ENCODE measurements at regions of chr2 and their contacts with region 1.

Region 1: DNA sequence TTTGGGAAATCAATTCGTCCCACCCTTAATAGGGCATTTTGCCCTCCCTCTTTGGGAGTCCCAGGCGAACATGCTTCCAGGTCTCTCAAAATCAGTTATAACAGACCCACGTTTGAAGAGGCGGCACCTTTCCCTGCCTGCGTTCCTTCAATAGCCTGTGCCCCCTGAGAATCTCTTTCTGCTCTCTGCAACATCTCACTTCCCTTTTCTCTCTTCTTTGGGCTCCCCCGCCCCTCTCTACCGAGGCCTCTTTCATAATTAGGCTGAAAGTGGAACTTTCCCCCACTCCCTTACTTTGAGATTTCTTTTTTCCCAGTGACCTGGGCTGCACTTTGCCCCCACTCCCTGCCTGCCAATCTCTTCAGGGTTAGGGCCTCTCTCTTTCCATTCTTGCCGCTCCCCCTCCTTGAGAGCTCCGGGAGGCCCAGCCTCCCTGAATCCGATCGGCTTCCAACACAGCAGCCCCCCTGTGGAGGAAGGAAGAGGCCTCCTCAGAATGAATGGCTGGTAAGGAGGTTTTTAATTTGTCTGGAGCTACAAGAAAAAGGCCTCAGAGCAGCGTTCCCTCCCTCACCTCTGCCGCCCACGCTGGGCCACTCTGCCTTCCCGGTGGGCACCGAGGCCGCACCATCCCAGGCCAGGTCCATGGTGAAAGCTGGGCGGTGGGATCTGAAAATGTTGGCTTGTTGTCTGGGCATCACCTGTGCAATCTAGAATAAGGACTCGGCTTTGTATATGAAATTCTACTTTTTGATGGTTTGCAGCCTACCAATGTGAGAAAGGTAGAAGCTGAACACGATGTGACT is 162.6 kb upstream of the SIX3 start:
- DNase-seq: peak in 1 of 2 experiments; percentile 73
- H3K4me3 ChIP-seq: peak overlapping the region; percentile 6 to 50 (median 29)
- H3K27ac ChIP-seq: no peak overlapping the region; the same call in 1 of the 2 replicates
- H3K4me1 ChIP-seq: peaks cover 16 to 38% (median 32%) of the 10 kb centered on the region in 4 experiments
- H3K27me3 ChIP-seq: peaks cover 0 to 2% (median 0%) of the 10 kb centered on the region in 4 experiments; a peak in 1 of 7 replicates
- CTCF ChIP-seq: no peak
- EP300 ChIP-seq: no peak
- POLR2A ChIP-seq: no peak
- RAD21 ChIP-seq: no peak; a peak in 3 of 4 replicates

Region 2: GRCh38 chr2:44793322-44793870 is 14.5 kb after region 1 on chr2:
- CTCF ChIA-PET with region 1: interaction called, 18 read pairs
- POLR2A ChIA-PET with region 1: interaction called, 27 read pairs
- DNase-seq: peak in 1 of 2 experiments; percentile 59
- H3K4me3 ChIP-seq: no peak overlapping the region
- H3K27ac ChIP-seq: no peak overlapping the region
- H3K4me1 ChIP-seq: peaks cover 9 to 23% (median 16%) of the 10 kb centered on the region in 4 experiments
- H3K27me3 ChIP-seq: no peaks in the 10 kb centered on the region; a peak in 3 of 7 replicates
- CTCF ChIP-seq: no peak
- EP300 ChIP-seq: no peak
- POLR2A ChIP-seq: no peak
- RAD21 ChIP-seq: no peak

Region 3: DNA sequence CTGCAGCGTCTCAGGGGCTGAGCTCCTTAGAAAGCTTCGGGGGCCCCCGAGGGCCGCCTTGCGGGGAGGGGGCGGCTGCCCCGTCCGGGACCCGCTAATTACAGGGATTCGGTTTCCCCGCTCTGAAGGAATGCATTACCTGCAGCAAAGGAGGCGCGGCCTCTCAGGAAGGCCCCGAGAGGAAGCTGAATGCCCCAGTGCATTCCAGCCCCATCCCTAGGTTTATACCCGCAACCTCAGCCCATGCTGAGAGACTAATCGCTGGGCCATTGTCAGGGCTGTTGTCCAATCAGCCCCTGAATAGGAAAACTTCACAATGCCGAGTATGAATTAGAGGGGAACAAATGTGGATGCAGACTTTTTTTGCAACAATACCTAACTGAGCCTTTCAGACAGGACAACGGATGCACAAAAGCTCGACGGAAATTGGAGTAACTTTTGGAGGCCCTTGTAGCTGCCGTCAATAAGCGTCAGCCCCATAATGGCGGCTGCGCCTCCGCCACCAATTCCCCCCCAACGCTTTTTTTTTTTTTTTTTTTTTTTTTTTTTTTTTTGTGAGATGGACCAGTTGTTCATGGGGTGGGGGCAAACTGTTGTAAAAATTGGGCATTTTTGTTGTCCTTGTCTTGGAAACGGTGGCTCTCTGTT is 24.0 kb after region 1 on chr2:
- CTCF ChIA-PET with region 1: interaction called, 4 read pairs
- POLR2A ChIA-PET with region 1: interaction called, 23 read pairs
- DNase-seq: peak; percentile 88 to 92
- H3K4me3 ChIP-seq: peak overlapping the region; percentile 33 to 65 (median 44)
- H3K27ac ChIP-seq: no peak overlapping the region
- H3K4me1 ChIP-seq: peaks cover 13 to 46% (median 37%) of the 10 kb centered on the region in 4 experiments
- H3K27me3 ChIP-seq: peaks cover 0 to 5% (median 2%) of the 10 kb centered on the region in 4 experiments; a peak in 3 of 7 replicates
- CTCF ChIP-seq: no peak
- EP300 ChIP-seq: peak in 1 of 2 experiments; percentile 92; a peak in 2 of 3 replicates
- POLR2A ChIP-seq: peak in 1 of 2 experiments; percentile 57; a peak in 1 of 3 replicates
- RAD21 ChIP-seq: no peak; a peak in 1 of 4 replicates

Region 4: DNA sequence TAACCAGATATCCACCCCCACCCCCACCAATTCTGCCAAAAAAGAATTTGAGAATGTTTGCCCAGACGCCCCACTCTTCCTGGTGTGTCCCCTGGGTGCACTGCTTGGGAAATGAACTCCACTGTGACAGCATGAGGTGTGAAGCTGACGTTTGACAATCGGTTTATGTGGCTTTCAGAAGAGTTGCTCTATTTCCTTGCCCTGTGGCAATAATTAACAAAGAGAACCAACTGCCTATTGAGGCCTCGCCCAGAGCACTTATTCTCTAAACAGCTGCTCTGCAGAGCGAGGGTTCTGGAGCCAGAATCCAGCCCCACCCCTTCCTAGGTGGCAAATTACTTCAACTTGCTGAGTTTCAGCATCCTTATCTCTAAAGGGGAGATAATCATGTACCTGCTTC is 46.8 kb after region 1 on chr2:
- CTCF ChIA-PET with region 1: no interaction called
- POLR2A ChIA-PET with region 1: no interaction called
- DNase-seq: no peak
- H3K4me3 ChIP-seq: no peak overlapping the region
- H3K27ac ChIP-seq: no peak overlapping the region
- H3K4me1 ChIP-seq: peaks cover 0 to 5% (median 0%) of the 10 kb centered on the region in 4 experiments; a peak in 1 of 7 replicates
- H3K27me3 ChIP-seq: no peaks in the 10 kb centered on the region
- CTCF ChIP-seq: no peak
- EP300 ChIP-seq: no peak
- POLR2A ChIP-seq: no peak
- RAD21 ChIP-seq: no peak

Region 5: DNA sequence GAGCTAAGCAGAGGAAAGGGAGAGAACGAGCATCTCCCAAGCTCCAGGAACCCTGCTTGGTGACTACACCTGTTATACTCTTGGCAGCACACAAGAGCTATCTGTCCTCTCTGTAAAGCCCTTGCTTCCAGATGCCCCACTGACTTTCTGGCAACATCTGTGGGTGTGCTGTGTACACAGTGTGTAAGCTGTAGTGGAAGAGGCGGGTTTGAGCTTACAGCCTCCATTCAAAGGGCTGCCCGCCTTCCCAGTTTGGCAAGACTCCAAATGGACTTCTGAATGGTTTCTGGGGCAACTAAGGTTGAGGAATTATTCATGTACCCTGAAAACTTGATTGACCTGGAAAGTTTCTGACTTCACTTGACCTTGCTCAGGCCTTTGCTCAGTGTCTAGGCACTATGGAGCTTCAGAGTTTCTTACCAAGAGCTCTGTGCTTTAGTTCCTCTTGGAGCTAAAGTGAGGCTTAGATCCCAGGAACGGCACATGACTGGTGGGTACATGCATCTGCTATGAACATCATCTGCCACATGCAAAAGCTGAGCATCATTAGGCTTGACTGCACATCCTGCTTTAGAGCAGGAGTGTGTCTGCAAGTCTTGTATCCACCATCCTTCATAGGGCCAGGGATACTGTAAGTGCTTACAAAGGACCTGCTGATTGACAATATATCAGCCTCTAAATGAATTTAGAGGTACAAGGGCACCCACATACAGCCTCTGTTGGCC is 521.3 kb after region 1 on chr2:
- CTCF ChIA-PET with region 1: no interaction called
- POLR2A ChIA-PET with region 1: no interaction called
- DNase-seq: no peak
- H3K4me3 ChIP-seq: no peak overlapping the region
- H3K27ac ChIP-seq: no peak overlapping the region
- H3K4me1 ChIP-seq: peaks cover 0 to 2% (median 0%) of the 10 kb centered on the region in 4 experiments; a peak in 1 of 7 replicates
- H3K27me3 ChIP-seq: no peaks in the 10 kb centered on the region; a peak in 1 of 7 replicates
- CTCF ChIP-seq: no peak
- EP300 ChIP-seq: no peak
- POLR2A ChIP-seq: no peak
- RAD21 ChIP-seq: no peak

Measured in H1 (cell line).